ENCODE measurements at regions of chr13 and their contacts with region 1.

Region 1: GRCh38 chr13:113904411-113904810 is 40.5 kb upstream of the GAS6 start:
- DNase-seq: peak; percentile 64
- H3K4me3 ChIP-seq: no peak overlapping the region
- H3K27ac ChIP-seq: no peak overlapping the region
- H3K4me1 ChIP-seq: peaks cover 15% of the 10 kb centered on the region
- H3K27me3 ChIP-seq: no peaks in the 10 kb centered on the region
- CTCF ChIP-seq: peak; percentile 84

Region 2: DNA sequence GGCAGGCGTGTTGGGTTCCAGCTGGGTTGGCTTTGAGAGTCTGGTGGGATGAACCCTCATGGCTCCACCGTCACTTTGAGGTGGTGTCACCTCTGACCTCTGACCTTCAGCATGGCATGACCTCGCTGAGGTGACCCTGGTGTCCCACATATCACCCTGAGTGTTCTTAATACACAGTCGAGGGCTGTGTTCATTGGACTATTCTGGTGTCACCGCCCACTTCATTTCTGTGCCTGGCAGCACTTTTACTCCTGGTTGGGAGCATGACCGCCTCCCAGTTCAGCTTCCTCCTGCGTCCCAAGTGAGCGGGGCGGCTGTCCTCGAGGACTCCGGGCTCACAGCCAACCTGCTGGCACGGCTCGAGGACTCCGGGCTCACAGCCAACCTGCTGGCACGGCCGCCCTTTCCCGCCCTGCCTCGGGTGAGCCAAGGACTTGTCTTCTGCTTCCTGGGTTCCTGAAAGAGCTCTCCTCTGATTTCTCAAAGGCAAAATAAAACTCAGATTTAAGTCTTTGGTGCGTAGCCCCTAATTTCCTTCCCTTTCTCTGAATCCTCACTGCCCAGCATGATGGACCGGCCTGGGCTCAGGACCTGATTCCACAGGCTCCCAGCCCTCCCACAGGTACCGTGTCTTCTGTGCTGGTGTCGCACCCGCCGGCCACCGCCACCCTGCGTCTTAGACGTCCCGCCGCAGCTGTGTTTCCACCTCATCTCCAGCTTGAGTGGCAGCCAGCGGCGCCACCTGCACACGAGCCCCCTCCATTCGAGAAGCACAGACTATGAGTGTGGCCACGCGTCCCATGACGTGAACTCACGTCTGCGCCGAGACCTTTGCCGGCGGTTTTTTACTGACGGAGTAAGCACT is 256.8 kb before region 1 on chr13:
- intact Hi-C with region 1: no loop called
- DNase-seq: peak; percentile 89
- H3K4me3 ChIP-seq: no peak overlapping the region
- H3K27ac ChIP-seq: peak overlapping the region; percentile 66
- H3K4me1 ChIP-seq: peaks cover 20% of the 10 kb centered on the region
- H3K27me3 ChIP-seq: no peaks in the 10 kb centered on the region
- CTCF ChIP-seq: no peak

Region 3: GRCh38 chr13:113816946-113817859 is 87.2 kb before region 1 on chr13:
- intact Hi-C with region 1: loop called (anchors 5 kb)
- DNase-seq: peak; percentile 88
- H3K4me3 ChIP-seq: peak overlapping the region; percentile 47
- H3K27ac ChIP-seq: peak overlapping the region; percentile 82
- H3K4me1 ChIP-seq: peaks cover 76% of the 10 kb centered on the region
- H3K27me3 ChIP-seq: no peaks in the 10 kb centered on the region
- CTCF ChIP-seq: peak; percentile 88

Region 4: GRCh38 chr13:114099191-114099590 is 194.8 kb after region 1 on chr13:
- intact Hi-C with region 1: no loop called
- DNase-seq: peak; percentile 83
- H3K4me3 ChIP-seq: peak overlapping the region; percentile 32
- H3K27ac ChIP-seq: peak overlapping the region; percentile 69
- H3K4me1 ChIP-seq: peaks cover 34% of the 10 kb centered on the region
- H3K27me3 ChIP-seq: no peaks in the 10 kb centered on the region
- CTCF ChIP-seq: no peak